Activated naive CD4-positive, alpha-beta T cell treated with anti-CD3 and anti-CD28 coated beads for 36 hours (primary cell): ENCODE measurements at regions of chr19 and their contacts with region 1.

Region 1: DNA sequence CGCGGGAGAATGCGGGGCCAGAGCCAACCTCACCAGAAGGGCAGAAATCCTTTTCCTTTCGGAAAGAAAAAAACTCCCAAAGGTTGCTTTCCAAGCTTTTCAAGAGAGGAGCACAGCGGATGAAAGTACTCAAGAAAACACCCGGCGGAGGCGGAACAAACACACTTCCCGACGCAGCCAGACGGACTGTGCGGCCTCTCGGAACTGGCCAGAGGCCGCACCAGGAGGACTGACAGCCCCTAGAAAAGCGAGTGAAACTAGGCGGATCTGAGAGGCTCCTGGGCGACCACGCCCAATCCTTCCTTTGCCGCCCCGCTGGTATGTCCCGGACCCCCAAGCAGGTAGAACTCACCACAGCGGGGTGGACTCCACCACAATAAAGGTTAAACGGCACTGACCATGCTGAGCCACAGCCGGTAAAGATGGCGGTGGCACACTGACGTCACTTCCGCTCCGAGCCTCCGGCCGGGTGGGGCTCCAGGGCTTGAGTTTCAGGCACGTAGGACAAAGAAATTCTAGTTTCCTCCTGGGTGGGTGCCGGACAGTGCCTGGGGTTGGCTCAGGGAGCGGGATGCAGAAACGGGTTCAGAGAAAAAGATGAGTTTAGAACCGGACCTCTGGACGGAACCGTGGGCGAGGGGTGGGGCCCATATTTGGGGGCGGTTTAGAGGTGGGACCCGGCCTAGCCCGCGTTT is at the start of gene ZNF562:
- DNase-seq: peak; percentile 86
- H3K4me3 Mint-ChIP-seq: peak within 1 kb of the TSS; percentile 90
- H3K27ac Mint-ChIP-seq: peak within 1 kb of the TSS; percentile 98
- H3K4me1 Mint-ChIP-seq: peaks cover 23% of the 10 kb centered on the region
- H3K27me3 Mint-ChIP-seq: no peaks in the 10 kb centered on the region
- total RNA-seq, gene ZNF562: 20.1 to 21.9 TPM

Region 2: GRCh38 chr19:9309139-9309973 is 365.5 kb before region 1 on chr19 and contains the start of gene ZNF699:
- CTCF ChIA-PET with region 1: no interaction called
- intact Hi-C with region 1: loop called (anchors 1 kb)
- DNase-seq: peak; percentile 99
- H3K4me3 Mint-ChIP-seq: peak within 1 kb of the TSS; percentile 86
- H3K27ac Mint-ChIP-seq: peak within 1 kb of the TSS; percentile 97
- H3K4me1 Mint-ChIP-seq: peaks cover 12% of the 10 kb centered on the region
- H3K27me3 Mint-ChIP-seq: peaks cover 2% of the 10 kb centered on the region
- total RNA-seq, gene ZNF699: 4.6 to 6.4 TPM

Region 3: DNA sequence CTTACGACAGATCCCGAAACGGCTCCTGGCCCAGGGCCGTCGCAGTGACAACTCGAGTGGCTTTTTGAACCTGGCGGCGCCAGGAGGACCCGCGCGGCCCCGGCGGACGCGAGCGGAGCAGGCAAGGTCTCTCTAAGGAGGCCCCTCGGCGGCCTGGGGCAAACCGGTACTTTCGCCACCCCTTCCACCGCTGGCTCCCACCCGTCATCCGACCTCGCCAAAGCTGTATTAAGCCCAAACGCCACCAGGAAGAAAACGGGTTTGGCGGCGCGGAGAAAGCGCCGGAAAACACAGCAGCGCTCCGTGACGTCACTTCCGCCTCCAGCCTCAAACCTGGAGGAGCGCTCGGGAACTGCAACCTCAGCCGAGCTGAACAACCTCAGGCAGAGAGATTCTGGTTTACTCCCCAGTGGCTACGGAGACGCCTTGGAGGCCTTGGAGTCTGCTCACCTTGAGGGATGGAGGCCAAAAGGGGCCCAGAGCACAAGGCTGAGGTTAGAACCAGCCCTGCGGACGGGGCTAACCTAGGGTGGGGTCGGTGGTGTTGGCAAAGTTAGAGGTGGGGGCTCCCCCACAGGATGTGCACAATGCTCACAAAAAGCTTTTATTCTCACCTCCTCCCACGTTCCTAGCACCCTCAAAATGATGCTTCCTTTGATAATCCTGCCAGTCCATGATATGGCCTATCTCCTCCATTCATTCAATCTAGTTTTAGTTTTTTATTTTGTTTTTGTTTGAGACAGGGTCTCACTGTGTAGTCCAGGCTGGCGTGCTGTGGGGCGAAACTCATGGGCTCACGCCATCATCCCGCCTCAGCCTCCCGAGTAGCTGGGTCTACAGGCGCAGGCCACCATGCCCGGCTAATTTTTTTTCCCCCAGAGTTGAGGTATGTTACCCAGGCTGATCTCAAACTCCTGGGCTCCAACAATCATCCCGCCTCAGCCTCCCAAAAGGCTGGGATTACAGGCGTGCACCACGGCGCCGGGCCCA is 239.2 kb before region 1 on chr19 and contains the start of gene ZNF266:
- CTCF ChIA-PET with region 1: no interaction called
- intact Hi-C with region 1: loop called (anchors 10 kb)
- DNase-seq: peak; percentile 96
- H3K4me3 Mint-ChIP-seq: peak within 1 kb of the TSS; percentile 90
- H3K27ac Mint-ChIP-seq: peak within 1 kb of the TSS; percentile 99
- H3K4me1 Mint-ChIP-seq: peaks cover 20% of the 10 kb centered on the region
- H3K27me3 Mint-ChIP-seq: no peaks in the 10 kb centered on the region
- total RNA-seq, gene ZNF266: 19.7 to 21.9 TPM

Region 4: GRCh38 chr19:9507285-9507684 is 167.5 kb before region 1 on chr19:
- CTCF ChIA-PET with region 1: no interaction called
- intact Hi-C with region 1: no loop called
- DNase-seq: no peak
- H3K4me3 Mint-ChIP-seq: no peak overlapping the region
- H3K27ac Mint-ChIP-seq: no peak overlapping the region
- H3K4me1 Mint-ChIP-seq: no peaks in the 10 kb centered on the region
- H3K27me3 Mint-ChIP-seq: no peaks in the 10 kb centered on the region

Region 5: DNA sequence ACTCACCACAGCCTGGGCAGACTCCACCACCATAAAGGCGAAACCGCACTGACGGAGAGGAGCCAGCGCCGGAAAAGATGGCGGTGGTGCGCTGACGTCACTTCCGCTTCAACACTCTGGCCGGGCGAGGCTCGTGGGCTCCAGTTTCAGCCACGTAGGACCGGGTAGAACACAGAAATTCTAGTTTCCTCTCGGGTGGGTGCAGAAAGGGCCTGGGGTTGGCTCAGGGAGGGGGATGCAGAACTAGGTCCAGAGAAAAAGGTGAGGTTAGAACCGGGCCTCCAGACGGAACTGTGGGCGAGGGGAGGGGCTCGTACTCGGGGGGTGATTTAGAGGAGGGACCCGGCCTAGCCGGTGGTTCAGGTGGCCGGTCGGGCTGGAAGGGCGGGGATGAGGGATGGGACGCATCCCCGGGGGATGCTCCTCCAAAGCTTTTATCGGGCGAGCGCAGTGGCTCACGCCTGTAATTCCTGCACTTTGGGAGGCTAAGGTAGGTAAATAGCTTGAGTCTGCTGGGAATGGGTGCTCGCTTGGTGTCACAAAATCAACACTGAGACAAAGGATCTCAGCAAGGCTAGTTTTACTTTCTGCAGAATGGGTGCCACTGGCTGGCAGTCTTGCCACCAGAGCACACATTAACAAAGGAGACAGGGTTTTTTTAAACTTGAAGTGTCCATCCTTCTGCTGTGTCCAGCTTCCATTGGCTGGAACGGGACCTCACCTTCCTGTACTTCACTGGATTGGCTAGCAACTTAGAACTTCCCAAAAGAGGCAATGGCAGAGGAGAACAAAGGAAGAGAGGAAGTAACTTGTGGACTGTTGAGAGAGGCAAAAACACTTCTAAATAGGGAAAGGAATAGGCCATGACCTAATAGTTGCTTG is 53.4 kb before region 1 on chr19 and contains the start of gene ZNF561:
- CTCF ChIA-PET with region 1: no interaction called
- intact Hi-C with region 1: loop called (anchors 1 kb)
- DNase-seq: peak; percentile 90
- H3K4me3 Mint-ChIP-seq: peak within 1 kb of the TSS; percentile 98
- H3K27ac Mint-ChIP-seq: peak within 1 kb of the TSS; percentile 99
- H3K4me1 Mint-ChIP-seq: peaks cover 18% of the 10 kb centered on the region
- H3K27me3 Mint-ChIP-seq: no peaks in the 10 kb centered on the region
- total RNA-seq, gene ZNF561: 28.7 to 29.4 TPM

Region 6: DNA sequence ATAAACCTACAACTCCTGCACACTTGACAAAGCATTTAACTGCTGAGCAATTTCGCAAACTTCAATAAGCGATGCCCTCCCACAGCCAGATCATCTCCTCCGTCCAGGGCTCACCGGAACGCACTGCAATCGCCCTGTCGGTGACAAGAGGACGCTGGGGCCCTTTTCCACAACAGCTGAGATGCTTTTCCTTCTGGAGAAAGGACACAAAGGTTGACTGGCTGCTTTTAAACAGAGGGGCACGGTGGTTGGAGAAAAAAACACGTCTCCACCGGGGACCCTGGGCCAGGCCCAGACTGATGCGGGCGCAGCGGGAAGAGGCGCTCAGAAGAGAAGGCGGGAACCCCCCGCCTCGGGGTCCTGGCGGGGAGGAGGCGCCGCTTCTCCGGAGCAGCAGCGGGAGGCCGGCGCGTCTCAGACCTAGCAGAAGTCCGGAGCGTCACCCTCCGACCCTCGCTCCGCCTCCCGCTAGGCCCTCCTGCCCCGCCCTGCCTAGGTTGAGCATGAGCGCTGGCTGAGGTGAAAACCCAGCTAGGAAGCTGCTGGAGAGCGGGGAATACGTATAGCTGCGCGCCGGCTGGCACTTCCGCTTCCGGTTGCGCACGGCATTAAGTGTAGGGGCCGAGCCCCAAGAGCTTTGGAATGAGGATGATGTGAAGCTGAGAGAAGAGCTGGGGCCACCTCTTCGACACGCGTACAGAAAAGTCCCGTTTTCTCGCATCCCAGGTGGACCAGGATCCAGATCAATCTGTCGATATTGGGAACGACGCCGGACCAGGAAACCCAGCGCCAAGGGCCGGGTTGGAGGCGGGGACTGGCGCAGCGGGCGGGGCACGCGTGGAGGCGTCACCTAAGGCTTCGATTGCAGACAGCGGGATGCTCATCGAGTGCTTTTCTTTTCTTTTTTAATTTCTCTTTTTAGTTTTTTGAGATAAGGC is 93.6 kb after region 1 on chr19 and contains the start of gene ZNF846:
- CTCF ChIA-PET with region 1: no interaction called
- intact Hi-C with region 1: loop called (anchors 1 kb)
- DNase-seq: peak; percentile 96
- H3K4me3 Mint-ChIP-seq: peak within 1 kb of the TSS; percentile 98
- H3K27ac Mint-ChIP-seq: peak within 1 kb of the TSS; percentile 98
- H3K4me1 Mint-ChIP-seq: peaks cover 5% of the 10 kb centered on the region
- H3K27me3 Mint-ChIP-seq: no peaks in the 10 kb centered on the region
- total RNA-seq, gene ZNF846: 2.0 to 3.5 TPM